ENCODE measurements at regions of chr11 and their contacts with region 1.

Region 1: GRCh38 chr11:65558002-65558931 is at the start of gene LTBP3:
- DNase-seq: peak; percentile 82
- H3K4me3 Mint-ChIP-seq: peak within 1 kb of the TSS; percentile 86
- H3K27ac Mint-ChIP-seq: peak within 1 kb of the TSS; percentile 88
- H3K4me1 Mint-ChIP-seq: peaks cover 49% of the 10 kb centered on the region
- H3K27me3 Mint-ChIP-seq: no peaks in the 10 kb centered on the region
- total RNA-seq, gene LTBP3: 94.9 and 96.9 TPM in 2 replicates

Region 2: DNA sequence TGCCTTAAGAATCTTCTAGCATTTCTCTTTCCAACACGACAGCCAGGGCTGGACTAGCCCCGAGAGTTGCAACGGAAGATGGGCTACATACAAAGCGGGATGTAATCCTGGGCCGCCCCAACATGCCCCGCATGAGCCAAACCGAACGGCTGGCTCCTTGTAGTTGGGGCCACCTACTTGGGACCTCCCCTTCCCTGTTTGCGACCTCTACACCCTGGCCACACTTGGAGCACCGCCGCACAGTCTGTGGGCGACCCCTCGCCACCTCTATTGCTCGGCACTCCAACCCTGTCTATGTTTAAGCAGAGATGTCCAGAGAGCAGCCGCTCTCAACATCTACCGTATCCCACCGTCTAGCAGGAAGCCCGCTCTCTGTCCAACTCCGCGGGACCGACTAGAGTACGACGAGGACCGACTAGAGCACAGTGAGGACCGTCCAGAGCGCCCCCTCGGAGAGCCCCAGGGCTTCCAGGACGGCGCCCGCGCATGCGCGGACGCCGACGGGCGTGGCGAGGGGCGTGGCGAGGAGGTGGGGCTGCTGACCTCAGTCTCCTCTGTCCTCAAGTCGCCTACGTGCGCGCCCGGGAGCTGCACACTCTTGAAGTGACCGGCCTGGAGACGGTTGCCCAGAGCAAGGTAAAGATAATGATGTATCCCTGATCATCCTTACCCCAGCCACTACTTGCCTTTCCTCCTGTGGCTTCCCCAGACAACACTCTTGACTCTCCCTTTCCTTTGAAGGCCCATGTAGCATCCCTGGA is 103.4 kb before region 1 on chr11:
- intact Hi-C with region 1: no loop called
- DNase-seq: peak; percentile 95
- H3K4me3 Mint-ChIP-seq: peak overlapping the region; percentile 94
- H3K27ac Mint-ChIP-seq: peak overlapping the region; percentile 83
- H3K4me1 Mint-ChIP-seq: peaks cover 25% of the 10 kb centered on the region
- H3K27me3 Mint-ChIP-seq: no peaks in the 10 kb centered on the region

Region 3: GRCh38 chr11:65546217-65546958 is 11.9 kb before region 1 on chr11:
- intact Hi-C with region 1: loop called (anchors 1 kb)
- DNase-seq: peak; percentile 100
- H3K4me3 Mint-ChIP-seq: peak overlapping the region; percentile 79
- H3K27ac Mint-ChIP-seq: peak overlapping the region; percentile 83
- H3K4me1 Mint-ChIP-seq: peaks cover 40% of the 10 kb centered on the region
- H3K27me3 Mint-ChIP-seq: no peaks in the 10 kb centered on the region

Region 4: DNA sequence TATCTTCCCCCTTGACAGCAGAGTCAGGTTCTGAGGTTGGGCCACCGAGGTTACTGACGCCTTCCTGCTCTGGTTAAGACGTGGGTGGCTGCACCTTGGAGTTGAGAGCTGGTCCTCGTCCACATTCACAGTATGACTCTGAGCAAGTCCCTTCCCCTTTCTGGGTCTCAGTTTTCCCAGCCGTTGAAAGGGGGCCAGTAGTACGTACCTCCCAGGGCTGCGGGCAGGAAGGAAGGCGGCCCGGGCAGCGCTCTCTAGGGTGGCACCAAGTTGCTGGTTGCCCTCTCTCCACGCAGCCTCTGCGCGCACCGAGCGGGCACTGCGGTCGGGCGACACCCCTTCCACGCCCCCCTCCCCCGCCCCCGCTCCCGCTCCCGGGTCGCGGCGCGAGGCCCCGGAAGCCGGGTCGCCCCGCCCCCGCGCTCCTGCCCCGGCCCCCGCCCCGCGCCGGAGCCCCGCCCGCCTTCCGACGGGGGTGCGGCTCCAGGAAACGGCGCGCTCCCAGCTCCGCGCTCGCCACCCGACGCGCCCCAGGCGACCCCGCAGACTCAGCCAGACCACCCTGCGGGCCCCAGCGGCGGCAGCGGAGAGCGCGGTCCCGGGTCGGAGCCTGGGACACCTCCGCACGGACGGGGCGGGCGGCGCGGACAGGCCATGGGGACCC is 17.4 kb after region 1 on chr11 and contains the start of gene EHBP1L1:
- intact Hi-C with region 1: no loop called
- DNase-seq: peak; percentile 95
- H3K4me3 Mint-ChIP-seq: peak within 1 kb of the TSS; percentile 92
- H3K27ac Mint-ChIP-seq: peak within 1 kb of the TSS; percentile 96
- H3K4me1 Mint-ChIP-seq: peaks cover 50% of the 10 kb centered on the region
- H3K27me3 Mint-ChIP-seq: no peaks in the 10 kb centered on the region
- total RNA-seq, gene EHBP1L1: 167 and 173 TPM in 2 replicates

Region 5: DNA sequence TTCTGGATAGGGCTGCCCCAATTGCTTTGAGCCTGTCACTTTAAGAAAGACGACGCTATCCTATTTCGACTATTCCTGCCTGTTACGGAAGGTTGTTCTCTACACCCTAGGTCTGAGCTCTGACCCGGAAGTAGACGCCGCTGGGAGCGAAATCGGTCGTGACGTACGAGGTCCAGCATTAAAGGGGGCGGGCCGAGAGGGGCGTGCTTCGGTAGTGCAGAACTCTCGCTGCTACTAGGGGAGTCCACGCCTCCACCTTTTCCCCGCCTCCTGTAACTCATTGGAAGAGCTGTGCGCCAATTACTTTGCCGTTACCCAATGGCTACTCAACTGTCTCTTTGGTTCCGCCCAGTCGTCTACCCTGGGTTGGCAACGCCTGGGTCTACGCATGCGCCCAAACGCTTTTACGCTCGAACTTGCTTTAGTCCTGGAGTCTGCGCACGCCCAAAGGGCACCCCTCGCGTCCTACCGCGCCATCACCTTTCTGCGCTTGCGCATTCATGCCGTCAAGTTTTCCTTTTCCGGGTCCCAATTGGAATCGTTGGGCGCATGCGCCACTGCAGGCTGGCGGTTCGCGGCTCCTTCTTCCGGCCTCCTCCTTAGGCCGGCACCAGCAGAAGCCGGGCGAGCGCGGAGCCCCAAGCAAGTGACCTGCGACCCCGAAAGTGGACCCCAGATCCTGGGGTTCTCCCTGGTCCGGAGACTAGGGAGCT is 57.1 kb after region 1 on chr11 and contains the start of gene PCNX3:
- intact Hi-C with region 1: no loop called
- DNase-seq: peak; percentile 100
- H3K4me3 Mint-ChIP-seq: peak within 1 kb of the TSS; percentile 97
- H3K27ac Mint-ChIP-seq: peak within 1 kb of the TSS; percentile 93
- H3K4me1 Mint-ChIP-seq: peaks cover 34% of the 10 kb centered on the region
- H3K27me3 Mint-ChIP-seq: peaks cover 3% of the 10 kb centered on the region
- total RNA-seq, gene PCNX3: 52.0 and 55.1 TPM in 2 replicates

Measured in activated CD4-positive, alpha-beta T cell treated with anti-CD3 and anti-CD28 coated beads, Interleukin-2, amount 10 ng/mL, durations not matched to agents 24 days and 14 days (primary cell).